ENCODE measurements at regions of chr1 and their contacts with region 1.

Region 1: GRCh38 chr1:164611754-164612642 is 53.0 kb downstream of the PBX1 start:
- DNase-seq: peak; percentile 82
- H3K27ac ChIP-seq: no peak overlapping the region
- CTCF ChIP-seq: no peak

Region 2: GRCh38 chr1:164834641-164835040 is 222.6 kb after region 1 on chr1:
- CTCF ChIA-PET with region 1: no interaction called
- POLR2A ChIA-PET with region 1: interaction called, 10 read pairs
- DNase-seq: no peak
- H3K27ac ChIP-seq: no peak overlapping the region
- CTCF ChIP-seq: no peak

Region 3: DNA sequence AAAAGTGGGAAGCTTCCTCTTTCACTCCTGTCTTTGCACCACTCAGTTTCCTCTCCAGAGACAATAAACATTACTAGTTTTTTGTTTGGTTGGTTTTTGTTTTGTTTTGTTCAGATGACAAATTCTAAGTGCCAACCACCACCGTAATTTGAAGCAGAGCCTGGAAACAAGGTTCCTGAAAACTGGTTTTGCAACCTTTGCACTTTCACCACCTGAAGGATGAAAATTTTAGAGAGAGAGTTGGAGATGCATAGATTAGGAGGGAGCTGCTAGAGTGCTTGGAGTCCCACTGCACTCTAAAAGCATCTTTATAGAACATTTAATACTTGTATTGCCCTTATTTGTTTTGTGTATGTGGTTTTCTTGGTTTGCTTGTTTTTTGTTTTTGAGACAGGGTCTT is 998.9 kb after region 1 on chr1:
- CTCF ChIA-PET with region 1: no interaction called
- POLR2A ChIA-PET with region 1: no interaction called
- DNase-seq: no peak
- H3K27ac ChIP-seq: no peak overlapping the region
- CTCF ChIP-seq: no peak

Measured in RWPE1 (cell line).